Breast epithelium (tissue), 4 donors: ENCODE measurements at regions of chr4 and their contacts with region 1.

Region 1: GRCh38 chr4:126264839-126265238 is 950.1 kb downstream of the FAT4 start:
- DNase-seq: no peak
- H3K4me3 ChIP-seq: no peak overlapping the region
- H3K27ac ChIP-seq: no peak overlapping the region
- H3K4me1 ChIP-seq: no peaks in the 10 kb centered on the region
- H3K27me3 ChIP-seq: no peaks in the 10 kb centered on the region
- CTCF ChIP-seq: no peak
- POLR2A ChIP-seq: no peak

Region 2: GRCh38 chr4:127580300-127580699 is 1315.5 kb after region 1 on chr4:
- intact Hi-C with region 1: loop called (anchors 5 kb)
- DNase-seq: no peak
- H3K4me3 ChIP-seq: no peak overlapping the region
- H3K27ac ChIP-seq: no peak overlapping the region
- H3K4me1 ChIP-seq: no peaks in the 10 kb centered on the region
- H3K27me3 ChIP-seq: no peaks in the 10 kb centered on the region
- CTCF ChIP-seq: no peak
- POLR2A ChIP-seq: no peak